Head of caudate nucleus (tissue), 42 donors: ENCODE measurements at regions of chr1 and their contacts with region 1.

Region 1: DNA sequence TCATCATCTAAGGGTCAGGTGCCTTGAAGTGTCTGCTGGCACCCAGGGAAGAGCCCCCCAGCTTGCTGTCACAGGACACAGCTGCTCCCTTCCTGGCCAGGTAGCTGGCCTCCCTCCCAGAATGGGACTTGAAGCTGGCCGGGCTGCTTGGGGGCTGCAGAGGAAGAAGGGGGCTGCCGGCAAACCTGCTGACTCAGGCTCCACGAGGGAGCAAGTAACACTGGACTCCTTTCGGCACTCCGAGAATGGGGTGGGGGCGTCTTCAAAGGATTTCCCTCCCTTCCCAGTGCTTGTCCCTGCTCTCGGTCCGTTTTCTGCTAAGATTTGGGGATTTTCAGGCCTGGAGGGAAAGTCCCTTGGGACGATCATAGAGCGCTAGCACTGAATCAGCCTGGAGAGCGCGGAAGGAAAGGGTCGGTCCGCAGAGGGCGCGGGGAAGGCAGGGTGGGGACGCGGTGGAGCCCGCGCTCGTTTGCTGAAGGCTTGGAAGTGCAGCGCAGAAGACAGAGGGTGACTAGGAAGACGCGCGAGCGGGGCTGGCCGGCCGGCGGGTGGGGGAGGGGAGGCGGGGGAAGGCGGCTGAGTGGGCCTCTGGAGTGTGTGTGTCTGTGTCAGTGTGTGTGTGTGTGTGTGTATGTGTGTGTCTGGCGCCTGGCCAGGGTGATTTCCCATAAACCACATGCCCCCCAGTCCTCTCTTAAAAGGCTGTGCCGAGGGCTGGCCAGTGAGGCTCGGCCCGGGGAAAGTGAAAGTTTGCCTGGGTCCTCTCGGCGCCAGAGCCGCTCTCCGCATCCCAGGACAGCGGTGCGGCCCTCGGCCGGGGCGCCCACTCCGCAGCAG is at the start of gene CSF1:
- DNase-seq: peak; percentile 40 to 92 (median 78)

Region 2: DNA sequence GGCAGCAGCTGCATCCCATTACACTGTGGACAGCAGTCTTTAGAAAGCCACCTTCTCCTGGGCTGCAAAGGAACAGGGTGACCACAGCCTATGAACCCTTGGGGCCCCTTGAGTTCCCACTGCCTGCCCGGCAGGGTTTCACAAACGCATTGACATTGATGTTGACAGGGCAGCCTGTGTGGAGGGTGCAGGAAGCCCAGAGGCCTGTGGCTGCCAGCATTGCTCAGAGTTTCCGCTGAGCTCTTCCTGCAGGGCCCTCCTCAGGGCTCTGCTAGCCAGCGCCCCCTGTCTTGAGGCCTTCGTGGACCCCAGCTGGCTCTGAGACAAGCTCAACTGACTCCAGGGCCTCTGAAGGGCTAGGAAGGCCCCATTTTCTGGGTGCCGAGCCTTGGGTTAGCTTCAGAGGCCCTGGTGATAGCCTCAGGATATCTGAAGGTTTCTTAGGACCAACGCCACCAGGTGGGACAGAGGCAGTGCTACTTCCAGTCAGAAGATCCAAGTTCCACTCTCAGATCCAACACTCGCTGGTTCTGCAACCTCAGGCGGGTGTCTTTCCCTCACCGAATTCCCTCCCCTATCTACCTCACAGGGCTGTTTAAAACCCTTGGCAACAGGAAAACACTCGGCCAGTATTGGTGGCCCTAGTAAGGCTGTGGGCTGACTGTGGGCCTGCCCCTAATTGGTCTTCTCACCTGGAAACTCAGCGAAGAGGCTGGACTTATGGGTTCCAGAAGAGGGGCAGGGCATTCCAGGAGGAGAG is 119.4 kb before region 1 on chr1:
- intact Hi-C with region 1: loop called (anchors 10 kb)
- DNase-seq: peak in 24 of 42 donors; percentile 9 to 69 (median 38)